PC-3 (cell line): ENCODE measurements at regions of chr16 and their contacts with region 1.

Region 1: GRCh38 chr16:30637942-30638341 is 12.8 kb upstream of the PRR14 start:
- DNase-seq: peak; percentile 74
- ATAC-seq: peak; percentile 58
- H3K4me3 ChIP-seq: no peak overlapping the region
- H3K27ac ChIP-seq: no peak overlapping the region
- H3K4me1 ChIP-seq: no peaks in the 10 kb centered on the region; the same call in 1 of the 2 replicates
- H3K27me3 ChIP-seq: no peaks in the 10 kb centered on the region
- CTCF ChIP-seq: peak; percentile 69

Region 2: DNA sequence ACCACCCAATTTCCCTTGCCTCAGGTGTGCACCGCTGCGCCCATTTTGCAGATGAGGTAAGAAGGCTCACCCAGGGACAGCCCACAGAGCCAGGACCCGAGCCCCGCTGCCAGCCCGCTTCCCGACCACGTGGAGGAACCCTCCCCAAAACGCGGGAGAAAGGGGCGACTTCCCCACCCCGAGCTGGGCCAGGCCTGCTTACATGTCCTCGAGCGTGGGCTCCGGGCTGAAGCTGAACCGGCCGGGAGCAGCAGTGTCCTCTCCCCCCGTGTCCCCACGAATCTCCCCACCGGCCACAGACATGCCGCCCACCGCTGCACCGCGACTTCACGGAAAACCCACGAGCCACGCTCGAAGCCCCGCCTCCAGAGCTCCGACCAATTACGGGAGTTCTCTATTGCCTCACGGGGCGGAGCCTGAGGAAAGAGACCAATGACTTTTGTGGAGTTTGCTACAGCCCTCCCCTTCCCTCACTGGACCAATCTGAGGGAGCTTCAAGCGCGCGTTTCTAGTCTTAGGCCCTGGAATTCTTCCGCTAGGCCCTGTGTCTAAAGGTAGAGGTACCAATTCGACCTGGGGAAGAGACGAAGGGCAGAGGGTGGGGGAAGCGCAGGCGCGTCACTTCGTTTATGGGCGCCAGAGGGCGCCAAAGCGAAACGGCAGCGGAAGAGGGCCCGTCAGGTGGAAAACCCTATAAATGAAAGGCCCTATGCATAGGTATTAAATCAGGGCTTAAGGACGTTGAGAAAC is 208.1 kb before region 1 on chr16 and contains the start of gene DCTPP1:
- CTCF ChIA-PET with region 1: interaction called, 3 read pairs
- POLR2A ChIA-PET with region 1: interaction called, 16 read pairs
- intact Hi-C with region 1: loop called (anchors 5 kb)
- DNase-seq: peak; percentile 98
- ATAC-seq: peak; percentile 98
- H3K4me3 ChIP-seq: peak within 1 kb of the TSS; percentile 87
- H3K27ac ChIP-seq: peak within 1 kb of the TSS; percentile 60
- H3K4me1 ChIP-seq: peaks cover 12% of the 10 kb centered on the region; the same call in 1 of the 2 replicates
- H3K27me3 ChIP-seq: no peaks in the 10 kb centered on the region
- CTCF ChIP-seq: peak; percentile 83
- total RNA-seq, gene DCTPP1: 63.1 and 64.1 TPM in 2 replicates

Region 3: DNA sequence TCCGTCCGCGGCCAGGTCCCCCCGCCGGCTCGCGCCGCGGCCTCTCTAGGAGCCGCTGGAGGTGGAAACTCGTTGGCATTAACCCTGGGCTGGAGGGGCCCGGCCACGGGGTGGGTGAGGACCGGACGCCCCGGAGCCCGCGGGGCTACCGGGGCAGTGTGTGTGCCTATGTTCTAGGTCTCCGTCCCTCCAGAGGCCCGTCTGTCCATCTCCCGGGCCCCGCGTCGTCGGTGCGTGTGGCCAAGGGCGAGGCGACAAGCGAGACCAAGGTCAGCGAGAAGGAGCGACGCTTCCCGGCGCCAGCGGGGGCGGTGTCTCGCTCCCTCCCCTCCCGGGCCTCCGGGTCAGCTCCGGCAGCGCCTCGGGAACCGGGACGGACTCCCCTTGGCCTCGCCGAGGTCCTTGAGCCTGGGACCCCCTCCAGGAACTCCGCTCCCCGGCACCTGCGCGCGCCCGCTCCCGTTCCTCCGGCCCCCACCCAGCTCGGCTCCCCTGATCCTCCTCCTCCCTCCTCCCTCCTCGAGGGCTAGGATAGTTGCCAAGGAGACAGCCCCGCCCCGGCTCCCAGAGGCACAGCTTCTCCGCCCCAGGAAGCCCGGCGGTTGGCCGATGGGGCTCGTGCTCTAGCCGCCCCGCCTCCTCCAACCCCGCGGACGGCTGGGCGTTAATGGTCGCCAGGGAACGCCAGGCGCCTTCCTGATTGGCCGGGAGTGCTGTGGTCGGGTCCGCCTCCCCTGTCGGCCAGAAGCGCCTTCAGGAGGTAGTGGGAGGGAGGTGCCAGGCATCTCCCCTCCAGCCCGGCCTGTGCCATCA is 110.9 kb before region 1 on chr16:
- CTCF ChIA-PET with region 1: no interaction called
- POLR2A ChIA-PET with region 1: no interaction called
- intact Hi-C with region 1: loop called (anchors 10 kb)
- DNase-seq: peak; percentile 95
- ATAC-seq: peak; percentile 89
- H3K4me3 ChIP-seq: peak overlapping the region; percentile 89
- H3K27ac ChIP-seq: peak overlapping the region; percentile 88
- H3K4me1 ChIP-seq: peaks cover 7% of the 10 kb centered on the region
- H3K27me3 ChIP-seq: no peaks in the 10 kb centered on the region
- CTCF ChIP-seq: peak; percentile 21; the same call in 1 of the 2 replicates

Region 4: GRCh38 chr16:30571695-30572600 is 66.0 kb before region 1 on chr16 and contains the start of gene ZNF688:
- CTCF ChIA-PET with region 1: no interaction called
- POLR2A ChIA-PET with region 1: interaction called, 5 read pairs
- intact Hi-C with region 1: loop called (anchors 10 kb)
- DNase-seq: peak; percentile 90
- ATAC-seq: peak; percentile 75
- H3K4me3 ChIP-seq: peak within 1 kb of the TSS; percentile 94
- H3K27ac ChIP-seq: peak within 1 kb of the TSS; percentile 89
- H3K4me1 ChIP-seq: peaks cover 31% of the 10 kb centered on the region
- H3K27me3 ChIP-seq: no peaks in the 10 kb centered on the region
- CTCF ChIP-seq: no peak
- total RNA-seq, gene ZNF688: 5.5 and 14.3 TPM in 2 replicates

Region 5: DNA sequence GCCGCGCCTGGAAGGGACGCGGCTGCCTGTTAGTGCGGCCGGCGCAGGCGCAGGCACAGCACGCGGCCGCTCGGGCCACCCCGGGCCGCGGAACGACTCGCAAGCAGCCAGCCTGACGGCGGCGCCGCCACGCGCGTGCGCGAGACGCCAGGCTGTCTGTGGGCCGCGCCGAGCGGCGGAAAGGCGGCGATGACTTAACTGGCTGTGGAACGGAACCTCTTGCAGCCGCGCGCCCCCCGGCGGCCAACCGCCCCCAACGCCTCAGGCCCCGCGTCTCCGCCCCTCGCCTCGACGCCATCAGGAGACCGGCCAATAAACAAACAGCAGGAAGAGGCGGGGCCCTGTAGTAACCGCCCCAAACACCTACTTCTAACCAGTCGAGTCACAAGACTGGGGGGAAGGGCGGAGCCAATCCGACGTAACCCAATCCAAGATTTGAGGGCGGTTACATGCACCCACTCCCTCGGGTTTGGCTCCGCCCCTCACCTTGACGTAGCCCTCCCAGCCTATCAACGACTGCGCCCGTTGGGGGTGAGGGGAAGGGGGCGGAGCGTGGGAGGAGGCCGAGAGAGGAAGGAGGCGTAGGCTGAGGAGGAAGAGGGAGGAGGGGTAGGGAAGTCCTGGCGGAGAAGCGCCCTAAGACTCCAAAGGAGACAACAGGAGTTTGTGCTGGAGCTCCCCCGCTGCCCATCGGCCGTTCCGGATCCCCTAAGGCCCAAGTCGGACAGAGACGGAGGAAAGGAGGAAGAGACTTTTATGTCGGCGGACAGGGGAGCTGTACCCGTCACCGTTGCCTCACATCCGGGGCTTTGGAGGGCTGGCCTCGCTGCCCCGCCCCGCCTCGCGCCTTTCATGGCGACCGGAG is 20.2 kb after region 1 on chr16 and contains the start of gene FBRS:
- CTCF ChIA-PET with region 1: no interaction called
- POLR2A ChIA-PET with region 1: interaction called, 14 read pairs
- intact Hi-C with region 1: no loop called
- DNase-seq: peak; percentile 99
- ATAC-seq: peak; percentile 72
- H3K4me3 ChIP-seq: peak within 1 kb of the TSS; percentile 94
- H3K27ac ChIP-seq: peak within 1 kb of the TSS; percentile 96
- H3K4me1 ChIP-seq: peaks cover 23% of the 10 kb centered on the region
- H3K27me3 ChIP-seq: no peaks in the 10 kb centered on the region
- CTCF ChIP-seq: peak; percentile 62
- total RNA-seq, gene FBRS: 22.2 and 35.0 TPM in 2 replicates